ENCODE measurements at regions of chr19 and their contacts with region 1.

Region 1: GRCh38 chr19:14761612-14762011 is 16.7 kb downstream of the ADGRE2 start:
- DNase-seq: no peak
- ATAC-seq: no peak
- H3K4me3 ChIP-seq: no peak overlapping the region
- H3K27ac ChIP-seq: no peak overlapping the region
- H3K4me1 ChIP-seq: no peaks in the 10 kb centered on the region
- H3K27me3 ChIP-seq: no peaks in the 10 kb centered on the region
- CTCF ChIP-seq: no peak

Region 2: DNA sequence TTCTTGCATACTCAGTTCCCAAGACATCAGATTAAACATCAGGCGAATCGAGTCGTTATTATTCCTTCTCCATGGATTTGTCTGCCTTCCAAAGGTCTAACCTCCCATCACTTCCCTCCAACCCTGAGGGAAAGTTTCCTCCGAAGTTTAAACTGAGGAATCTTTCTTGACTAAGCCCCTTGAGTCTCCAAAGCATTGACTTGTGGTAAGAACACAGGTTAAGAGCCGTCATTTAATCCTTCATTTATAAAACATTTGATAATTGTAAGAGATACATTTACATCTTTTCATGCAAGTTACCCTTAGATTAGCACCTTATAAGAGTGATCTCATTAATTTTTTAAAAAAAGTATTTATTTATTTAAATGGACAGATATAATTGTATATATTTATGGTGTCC is 87.2 kb after region 1 on chr19 and contains the start of gene OR7A10:
- CTCF ChIA-PET with region 1: no interaction called
- POLR2A ChIA-PET with region 1: interaction called, 25 read pairs
- intact Hi-C with region 1: no loop called
- DNase-seq: no peak
- ATAC-seq: no peak
- H3K4me3 ChIP-seq: no peak within 1 kb of the TSS
- H3K27ac ChIP-seq: no peak within 1 kb of the TSS
- H3K4me1 ChIP-seq: no peaks in the 10 kb centered on the region
- H3K27me3 ChIP-seq: peaks cover 75% of the 10 kb centered on the region
- CTCF ChIP-seq: no peak
- total RNA-seq, gene OR7A10: not detected in 2 replicates